ENCODE measurements at regions of chr19 and their contacts with region 1.

Region 1: GRCh38 chr19:57682226-57682766 is 519 bp downstream of the ZNF551 start:
- DNase-seq: no peak
- ATAC-seq: no peak
- H3K4me3 ChIP-seq: peak overlapping the region; percentile 81
- H3K4me3 Mint-ChIP-seq: peak overlapping the region; percentile 98
- H3K27ac ChIP-seq: peak overlapping the region; percentile 29 to 55
- H3K27ac Mint-ChIP-seq: peak overlapping the region; percentile 93
- H3K4me1 ChIP-seq: peaks cover 26% of the 10 kb centered on the region
- H3K4me1 Mint-ChIP-seq: peaks cover 43% of the 10 kb centered on the region
- H3K27me3 ChIP-seq: peaks cover 4 to 8% of the 10 kb centered on the region in 2 experiments
- H3K27me3 Mint-ChIP-seq: peaks cover 14% of the 10 kb centered on the region
- CTCF ChIP-seq: no peak

Region 2: GRCh38 chr19:57708641-57709361 is 26.5 kb after region 1 on chr19 and contains the start of gene ZNF154:
- CTCF ChIA-PET with region 1: no interaction called
- POLR2A ChIA-PET with region 1: interaction called, 42 read pairs
- intact Hi-C with region 1: no loop called
- DNase-seq: peak in 12 of 14 experiments; percentile 10 to 80 (median 34)
- ATAC-seq: peak; percentile 90
- H3K4me3 ChIP-seq: peak within 1 kb of the TSS; percentile 55
- H3K4me3 Mint-ChIP-seq: peak within 1 kb of the TSS; percentile 96
- H3K27ac ChIP-seq: peak within 1 kb of the TSS; percentile 47 to 52
- H3K27ac Mint-ChIP-seq: peak within 1 kb of the TSS; percentile 99
- H3K4me1 ChIP-seq: peaks cover 10% of the 10 kb centered on the region
- H3K4me1 Mint-ChIP-seq: peaks cover 44% of the 10 kb centered on the region
- H3K27me3 ChIP-seq: no peaks in the 10 kb centered on the region
- H3K27me3 Mint-ChIP-seq: no peaks in the 10 kb centered on the region
- CTCF ChIP-seq: no peak
- total RNA-seq, gene ZNF154: 16.9 to 18.0 TPM

Region 3: DNA sequence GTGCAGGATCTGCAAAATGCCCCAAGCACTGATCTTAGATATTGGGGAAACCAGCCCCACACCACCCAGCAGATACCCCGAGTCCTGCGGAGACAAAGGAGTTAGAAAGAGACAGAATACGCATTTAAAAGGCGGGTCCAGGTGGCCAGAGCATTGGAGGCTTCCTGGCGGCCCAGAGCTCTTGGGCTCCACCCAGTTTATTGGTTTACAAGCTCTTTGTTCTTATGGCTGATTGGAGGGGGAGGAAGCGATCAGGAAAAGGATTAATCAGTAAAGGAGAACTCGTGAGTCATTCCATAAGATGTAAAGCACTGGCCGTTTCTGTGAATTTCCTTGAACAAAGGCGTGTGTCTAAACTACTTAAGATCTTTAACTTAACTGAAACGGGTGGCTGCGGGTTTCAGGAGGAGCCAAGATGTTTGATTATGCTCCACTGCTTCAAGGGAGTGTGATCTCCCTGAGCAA is 168.3 kb after region 1 on chr19:
- CTCF ChIA-PET with region 1: no interaction called
- POLR2A ChIA-PET with region 1: no interaction called
- intact Hi-C with region 1: no loop called
- DNase-seq: peak in 1 of 14 experiments; percentile 8
- ATAC-seq: no peak
- H3K4me3 ChIP-seq: peak overlapping the region; percentile 89
- H3K4me3 Mint-ChIP-seq: peak overlapping the region; percentile 96
- H3K27ac ChIP-seq: peak overlapping the region in 1 of 2 donors; percentile 84
- H3K27ac Mint-ChIP-seq: peak overlapping the region; percentile 97
- H3K4me1 ChIP-seq: peaks cover 24% of the 10 kb centered on the region
- H3K4me1 Mint-ChIP-seq: peaks cover 39% of the 10 kb centered on the region
- H3K27me3 ChIP-seq: no peaks in the 10 kb centered on the region
- H3K27me3 Mint-ChIP-seq: no peaks in the 10 kb centered on the region
- CTCF ChIP-seq: no peak